Activated T-helper 1 cell treated with anti-CD3 and anti-CD28 coated beads, Interleukin-12 subunit alpha, Interleukin-12 subunit beta, Interleukin-2, Interleukin-4 antibody, amounts not matched to agents 30 ng/mL and 10 ng/mL and 1 ng/mL, durations not matched to agents 14 hours and 24 hours and 36 hours (primary cell): ENCODE measurements at regions of chr4 and their contacts with region 1.

Region 1: DNA sequence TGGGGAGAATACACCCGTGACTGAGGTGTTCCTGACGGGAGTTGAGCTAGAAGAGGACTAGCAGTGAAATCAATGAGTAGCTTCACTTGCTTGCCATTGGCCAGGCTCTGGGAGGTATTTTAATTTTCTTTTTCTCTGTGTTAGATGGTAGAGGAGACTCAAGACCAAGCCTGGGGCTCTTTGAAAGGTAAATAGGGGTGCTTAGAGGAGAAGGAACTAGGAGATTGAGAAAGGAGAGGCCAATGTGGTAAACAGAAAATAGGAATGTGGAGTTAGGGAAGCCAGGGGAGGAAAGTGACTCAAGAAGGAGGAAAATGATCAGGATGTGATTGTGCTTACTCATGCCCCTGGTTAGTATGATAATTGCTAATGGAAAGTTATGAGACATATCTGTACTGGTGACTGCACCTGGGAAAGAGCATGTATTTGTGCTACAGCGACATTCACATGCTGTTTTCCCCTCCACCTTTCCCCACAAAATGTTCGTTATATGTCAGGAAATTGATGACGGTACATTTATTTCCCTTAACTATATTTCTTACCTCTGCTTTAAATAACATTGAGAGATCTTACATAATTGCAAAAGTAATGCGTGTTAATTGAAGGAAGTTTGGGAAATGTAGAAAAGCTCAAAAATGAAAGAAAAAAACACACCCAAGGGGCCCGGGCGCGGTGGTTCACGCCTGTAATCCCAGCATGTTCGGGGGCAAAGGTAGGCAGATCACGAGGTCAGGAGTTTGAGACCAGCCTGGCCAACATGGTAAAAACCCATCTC is 16.9 kb upstream of the LRBA start:
- DNase-seq: no peak
- H3K4me3 Mint-ChIP-seq: peak overlapping the region; percentile 73
- H3K27ac Mint-ChIP-seq: peak overlapping the region; percentile 88
- H3K4me1 Mint-ChIP-seq: peaks cover 37% of the 10 kb centered on the region
- H3K27me3 Mint-ChIP-seq: no peaks in the 10 kb centered on the region

Region 2: DNA sequence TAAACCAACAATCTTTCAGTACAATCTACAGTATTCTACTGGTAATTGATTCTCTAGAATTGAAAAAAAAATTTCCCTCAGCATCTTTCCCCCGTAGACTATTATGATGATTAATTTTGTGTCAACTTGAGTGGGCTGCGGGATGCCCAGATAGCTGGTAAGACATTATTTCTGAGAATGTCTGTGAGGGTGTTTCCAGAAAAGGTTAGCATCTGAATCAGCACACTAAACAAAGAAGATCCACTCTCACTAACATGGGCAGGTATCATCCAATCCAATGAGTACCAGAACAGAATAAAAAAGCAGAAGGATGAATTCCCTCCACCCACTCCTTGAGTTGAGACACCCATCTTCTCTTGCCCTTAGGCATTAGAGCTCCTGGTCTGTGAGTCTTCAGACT is 636.1 kb before region 1 on chr4:
- intact Hi-C with region 1: loop called (anchors 5 kb)
- DNase-seq: no peak
- H3K4me3 Mint-ChIP-seq: no peak overlapping the region
- H3K27ac Mint-ChIP-seq: peak overlapping the region; percentile 87
- H3K4me1 Mint-ChIP-seq: peaks cover 15% of the 10 kb centered on the region
- H3K27me3 Mint-ChIP-seq: no peaks in the 10 kb centered on the region

Region 3: GRCh38 chr4:150818661-150819060 is 213.4 kb before region 1 on chr4:
- intact Hi-C with region 1: loop called (anchors 5 kb)
- DNase-seq: no peak
- H3K4me3 Mint-ChIP-seq: no peak overlapping the region
- H3K27ac Mint-ChIP-seq: no peak overlapping the region
- H3K4me1 Mint-ChIP-seq: peaks cover 18% of the 10 kb centered on the region
- H3K27me3 Mint-ChIP-seq: no peaks in the 10 kb centered on the region

Region 4: DNA sequence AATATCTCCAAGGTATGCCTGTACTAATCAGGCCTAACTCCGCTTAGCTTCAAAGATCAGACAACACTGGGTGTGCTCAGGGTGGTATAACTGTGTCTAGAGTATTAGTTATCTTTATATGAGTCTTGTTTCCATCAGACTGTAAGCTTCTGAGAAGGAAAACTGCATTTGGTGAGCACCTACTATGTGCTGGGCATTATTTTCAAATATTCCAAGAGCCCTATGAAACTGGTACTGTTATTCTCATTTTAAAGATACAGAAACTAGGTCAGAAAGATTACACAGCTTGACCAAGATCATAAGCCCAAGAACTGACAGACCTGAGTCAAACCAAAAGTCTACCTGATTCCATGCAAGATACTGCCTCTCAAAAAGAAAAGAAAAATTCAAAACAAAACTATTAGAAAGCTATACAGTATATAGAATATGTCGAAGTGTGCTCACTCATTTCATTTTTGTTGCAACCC is 61.3 kb before region 1 on chr4:
- intact Hi-C with region 1: loop called (anchors 1 kb)
- DNase-seq: no peak
- H3K4me3 Mint-ChIP-seq: no peak overlapping the region
- H3K27ac Mint-ChIP-seq: peak overlapping the region; percentile 1
- H3K4me1 Mint-ChIP-seq: peaks cover 45% of the 10 kb centered on the region
- H3K27me3 Mint-ChIP-seq: no peaks in the 10 kb centered on the region

Region 5: GRCh38 chr4:151015459-151016347 is 16.3 kb before region 1 on chr4:
- intact Hi-C with region 1: loop called (anchors 1 kb)
- DNase-seq: peak; percentile 79
- H3K4me3 Mint-ChIP-seq: peak overlapping the region; percentile 100
- H3K27ac Mint-ChIP-seq: peak overlapping the region; percentile 99
- H3K4me1 Mint-ChIP-seq: peaks cover 34% of the 10 kb centered on the region
- H3K27me3 Mint-ChIP-seq: no peaks in the 10 kb centered on the region